ENCODE measurements at regions of chr16 and their contacts with region 1.

Region 1: DNA sequence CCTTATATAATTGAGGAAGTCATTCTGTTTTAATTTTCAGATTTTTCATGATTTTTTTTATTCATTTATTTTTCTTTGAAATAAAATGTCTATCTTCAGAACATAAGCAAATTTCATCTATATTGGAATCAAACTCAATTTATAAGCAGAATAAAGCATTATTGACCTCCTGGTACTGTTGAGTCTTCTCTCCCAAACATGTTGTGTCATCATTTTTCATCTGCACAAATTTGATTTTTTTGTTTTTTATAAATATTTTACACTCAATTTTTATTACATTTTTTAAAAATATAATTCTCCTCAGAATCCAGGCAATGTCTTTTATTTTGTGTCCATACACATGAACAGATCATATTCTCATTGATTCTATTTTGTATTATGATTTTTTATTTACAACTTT is 2363.9 kb downstream of the TP53TG3F start:
- DNase-seq: no peak
- H3K4me3 ChIP-seq: no peak overlapping the region
- H3K27ac ChIP-seq: no peak overlapping the region
- H3K4me1 ChIP-seq: no peaks in the 10 kb centered on the region
- H3K27me3 ChIP-seq: no peaks in the 10 kb centered on the region
- CTCF ChIP-seq: no peak
- EP300 ChIP-seq: no peak
- POLR2A ChIP-seq: no peak

Region 2: DNA sequence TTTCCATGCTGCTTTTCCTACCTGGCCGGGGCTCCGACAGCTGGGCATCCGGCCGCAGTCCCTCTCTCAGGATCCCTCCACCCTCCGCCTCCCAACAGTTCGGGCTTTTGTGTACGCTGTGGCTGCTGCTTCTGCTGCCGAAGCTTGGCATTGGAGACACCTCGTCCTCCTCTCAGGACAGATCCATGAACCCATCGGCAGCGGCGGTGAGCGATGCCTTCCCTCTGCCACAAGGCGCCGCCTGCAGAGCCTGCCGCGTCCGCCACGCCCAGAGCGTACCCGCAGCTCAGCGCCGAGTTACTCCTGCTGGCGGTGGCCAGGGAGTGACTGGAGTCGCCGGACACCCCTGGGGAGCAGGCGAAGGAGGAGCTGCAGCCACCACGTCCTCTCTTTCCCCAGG is 331.1 kb before region 1 on chr16:
- in situ Hi-C with region 1: no loop called
- intact Hi-C with region 1: no loop called
- DNase-seq: no peak
- H3K4me3 ChIP-seq: no peak overlapping the region
- H3K27ac ChIP-seq: no peak overlapping the region
- H3K4me1 ChIP-seq: no peaks in the 10 kb centered on the region
- H3K27me3 ChIP-seq: no peaks in the 10 kb centered on the region
- CTCF ChIP-seq: no peak
- EP300 ChIP-seq: no peak
- POLR2A ChIP-seq: no peak

Region 3: DNA sequence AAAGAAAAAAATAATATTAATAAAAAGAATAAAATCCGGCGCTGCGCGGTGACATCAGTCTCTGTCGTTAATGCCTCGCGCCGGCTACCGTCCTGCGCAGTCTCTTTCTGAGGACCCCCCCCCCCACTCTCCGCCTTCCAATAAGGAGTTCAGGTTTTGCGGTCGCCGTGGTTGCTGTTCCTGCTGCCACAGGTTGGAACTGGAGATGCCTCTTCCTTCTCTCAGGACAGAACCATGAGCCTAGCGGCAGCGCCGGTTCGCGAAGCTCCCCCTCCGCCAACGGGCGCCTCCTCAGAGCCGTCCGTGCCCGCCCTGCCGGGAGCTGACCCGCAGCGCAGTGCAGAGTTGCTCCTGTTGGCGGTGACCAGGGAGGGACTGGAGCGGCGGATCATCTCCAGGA is 270.6 kb before region 1 on chr16:
- in situ Hi-C with region 1: no loop called
- intact Hi-C with region 1: no loop called
- DNase-seq: no peak
- H3K4me3 ChIP-seq: no peak overlapping the region
- H3K27ac ChIP-seq: no peak overlapping the region
- H3K4me1 ChIP-seq: no peaks in the 10 kb centered on the region
- H3K27me3 ChIP-seq: no peaks in the 10 kb centered on the region
- CTCF ChIP-seq: no peak
- EP300 ChIP-seq: no peak
- POLR2A ChIP-seq: no peak

Region 4: GRCh38 chr16:35725949-35726348 is 97.4 kb before region 1 on chr16:
- in situ Hi-C with region 1: no loop called
- intact Hi-C with region 1: no loop called
- DNase-seq: no peak
- H3K4me3 ChIP-seq: no peak overlapping the region
- H3K27ac ChIP-seq: no peak overlapping the region
- H3K4me1 ChIP-seq: no peaks in the 10 kb centered on the region
- H3K27me3 ChIP-seq: no peaks in the 10 kb centered on the region
- CTCF ChIP-seq: no peak
- EP300 ChIP-seq: no peak
- POLR2A ChIP-seq: no peak

Region 5: DNA sequence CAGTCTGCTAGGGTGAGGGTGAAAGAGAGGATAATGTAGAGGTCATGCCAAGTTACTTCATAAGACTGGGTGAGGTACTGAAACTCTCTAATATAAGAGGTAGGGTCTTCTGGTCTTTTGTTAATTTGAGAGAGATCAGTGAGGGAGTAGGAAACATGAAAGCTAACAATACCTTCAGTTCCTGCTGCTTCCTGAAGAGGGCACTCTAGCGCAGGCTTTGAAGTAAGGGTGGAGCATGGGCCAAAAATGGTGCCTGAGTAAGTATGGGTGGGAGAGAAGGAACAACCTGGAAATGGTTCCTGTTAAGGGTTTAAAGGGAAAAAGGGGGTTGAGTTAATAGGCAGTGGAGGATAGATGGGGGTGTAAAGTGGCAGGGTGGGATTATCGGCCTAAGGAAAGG is 85.6 kb after region 1 on chr16:
- in situ Hi-C with region 1: loop called in 2 of 4 experiments (anchors 25 kb)
- intact Hi-C with region 1: no loop called
- DNase-seq: no peak
- H3K4me3 ChIP-seq: no peak overlapping the region
- H3K27ac ChIP-seq: no peak overlapping the region
- H3K4me1 ChIP-seq: no peaks in the 10 kb centered on the region
- H3K27me3 ChIP-seq: no peaks in the 10 kb centered on the region
- CTCF ChIP-seq: no peak
- EP300 ChIP-seq: no peak
- POLR2A ChIP-seq: no peak